AG04449 (cell line): ENCODE measurements at regions of chr22 and their contacts with region 1.

Region 1: GRCh38 chr22:41596776-41597634 is 7.4 kb upstream of the PMM1 start:
- DNase-seq: no peak
- H3K4me3 ChIP-seq: no peak overlapping the region
- CTCF ChIP-seq: peak; percentile 94

Region 2: DNA sequence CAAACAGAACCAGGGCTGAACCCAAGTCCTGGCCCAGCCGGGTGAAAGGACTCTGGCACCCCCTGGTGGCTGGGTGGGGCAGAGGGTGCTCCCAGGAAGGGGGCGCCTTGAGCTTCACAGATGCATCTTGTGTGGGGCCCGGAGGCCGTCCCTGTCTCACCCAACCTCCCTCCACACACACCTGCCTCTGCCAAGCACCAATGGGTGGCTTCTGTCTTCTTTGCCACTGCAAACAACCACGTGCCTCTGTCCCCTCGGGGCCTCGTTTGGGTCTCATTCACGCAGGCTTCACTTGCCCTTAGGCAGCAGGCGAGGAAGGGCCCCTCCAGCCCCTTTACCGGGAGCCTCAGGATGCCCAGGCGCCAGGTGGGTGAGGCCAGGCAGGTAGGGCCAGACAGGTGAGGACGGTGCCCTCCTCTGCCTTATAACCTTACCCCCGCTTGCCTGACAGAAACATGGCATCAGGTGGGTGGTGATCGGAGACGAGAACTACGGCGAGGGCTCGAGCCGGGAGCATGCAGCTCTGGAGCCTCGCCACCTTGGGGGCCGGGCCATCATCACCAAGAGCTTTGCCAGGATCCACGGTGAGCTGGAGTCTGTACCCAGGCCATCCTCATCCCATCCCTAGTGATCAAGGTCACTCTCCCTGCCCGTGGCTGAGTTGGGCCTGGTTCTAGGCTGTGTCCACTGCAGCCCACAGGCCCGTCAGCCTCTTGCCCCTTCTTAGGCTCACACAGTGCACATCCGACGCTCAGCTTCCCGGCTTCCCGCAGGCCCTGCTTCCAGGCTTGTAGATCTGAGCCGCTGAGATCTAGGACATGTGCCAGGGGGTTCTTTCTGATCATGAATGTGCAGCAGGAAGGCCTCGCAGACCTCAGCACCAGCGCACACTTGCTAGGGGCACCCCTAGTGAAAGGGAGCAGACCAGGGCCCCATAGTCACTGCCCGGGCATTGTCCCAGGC is 69.9 kb before region 1 on chr22:
- CTCF ChIA-PET with region 1: interaction called, 27 read pairs
- POLR2A ChIA-PET with region 1: no interaction called
- DNase-seq: no peak
- H3K4me3 ChIP-seq: no peak overlapping the region
- CTCF ChIP-seq: peak; percentile 88

Region 3: DNA sequence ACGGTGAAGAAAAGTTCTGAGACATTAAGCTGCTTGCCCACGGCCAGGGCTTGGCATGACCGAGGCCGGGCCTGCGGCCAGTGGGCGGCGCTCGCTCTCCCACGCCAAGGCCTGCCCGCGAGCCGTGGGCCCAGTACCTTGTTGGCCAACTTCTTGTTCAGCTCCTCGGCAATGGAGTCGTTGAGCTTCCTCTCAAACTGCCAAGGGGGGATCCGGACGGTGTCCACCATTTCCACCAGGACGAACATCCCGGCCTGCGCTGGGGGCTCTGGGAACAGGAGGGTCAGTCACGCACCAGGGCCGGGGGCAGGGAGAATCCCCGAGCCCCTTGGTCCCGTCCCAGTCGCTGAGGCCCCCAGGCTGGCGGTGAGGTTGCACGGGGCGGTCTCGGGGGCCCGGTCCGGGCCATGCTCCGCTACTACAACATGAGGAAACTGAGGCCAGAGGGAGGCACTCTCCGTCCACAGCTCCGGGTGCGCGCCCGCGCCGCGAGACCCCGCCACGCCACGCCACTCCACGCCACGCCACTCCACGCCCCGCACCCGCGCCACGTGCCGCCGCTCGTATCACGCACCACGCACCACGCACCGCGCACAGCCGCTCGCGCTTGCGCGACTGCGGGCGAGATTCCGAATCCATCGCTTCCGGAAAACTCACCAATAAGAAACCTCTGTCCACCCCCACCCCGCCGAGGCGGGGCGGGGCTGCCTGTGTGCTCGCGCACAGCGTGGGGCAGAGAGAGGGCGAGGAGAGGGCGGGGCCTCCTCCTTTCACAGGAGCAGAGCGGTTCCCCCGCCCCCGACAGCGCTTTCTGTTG is 52.9 kb before region 1 on chr22 and contains the start of gene POLR3H:
- CTCF ChIA-PET with region 1: interaction called, 49 read pairs
- POLR2A ChIA-PET with region 1: no interaction called
- DNase-seq: peak; percentile 72
- H3K4me3 ChIP-seq: peak within 1 kb of the TSS; percentile 91
- CTCF ChIP-seq: peak; percentile 78

Region 4: DNA sequence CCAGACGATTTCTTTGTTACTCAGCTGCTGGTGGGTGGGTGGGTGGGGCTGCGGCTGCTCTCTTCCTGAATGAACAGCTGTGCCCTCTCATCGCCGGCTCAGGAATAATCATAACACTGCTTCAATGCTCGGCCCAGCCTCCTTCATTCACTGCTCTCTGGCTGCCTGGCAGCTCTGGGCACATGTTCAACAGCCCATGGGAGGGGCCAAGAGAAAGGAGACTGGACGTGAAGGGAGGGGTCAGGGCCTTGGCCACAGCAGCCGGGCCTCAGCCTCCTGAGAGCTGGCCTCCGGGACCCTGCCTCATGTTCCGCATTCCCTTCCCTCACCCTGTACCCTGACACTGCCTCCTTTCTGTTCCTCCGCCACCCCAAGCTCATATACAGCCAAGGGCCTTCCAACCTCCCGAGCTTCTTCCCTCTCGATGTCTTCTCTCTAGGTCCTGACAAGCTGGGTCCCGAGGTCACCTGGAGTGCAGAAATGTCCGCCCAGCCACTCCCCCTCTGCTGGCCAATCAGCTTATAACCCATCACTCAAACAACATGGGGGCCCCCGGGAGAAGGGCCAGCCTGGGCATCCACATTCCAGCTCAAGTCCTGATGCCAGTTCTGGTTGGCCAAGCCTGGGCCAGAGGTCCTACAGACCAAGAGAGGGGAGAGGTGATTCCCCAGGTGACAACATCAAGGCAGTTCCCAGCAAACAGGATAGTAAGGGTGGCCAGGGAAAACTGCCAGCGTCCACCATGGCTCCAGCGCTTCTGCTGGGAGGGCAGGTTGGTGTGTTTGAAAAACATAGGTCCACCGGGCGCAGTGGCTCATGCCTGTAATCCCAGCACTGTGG is 39.4 kb before region 1 on chr22:
- CTCF ChIA-PET with region 1: interaction called, 34 read pairs
- POLR2A ChIA-PET with region 1: interaction called, 3 read pairs
- DNase-seq: no peak
- H3K4me3 ChIP-seq: no peak overlapping the region
- CTCF ChIP-seq: no peak

Region 5: DNA sequence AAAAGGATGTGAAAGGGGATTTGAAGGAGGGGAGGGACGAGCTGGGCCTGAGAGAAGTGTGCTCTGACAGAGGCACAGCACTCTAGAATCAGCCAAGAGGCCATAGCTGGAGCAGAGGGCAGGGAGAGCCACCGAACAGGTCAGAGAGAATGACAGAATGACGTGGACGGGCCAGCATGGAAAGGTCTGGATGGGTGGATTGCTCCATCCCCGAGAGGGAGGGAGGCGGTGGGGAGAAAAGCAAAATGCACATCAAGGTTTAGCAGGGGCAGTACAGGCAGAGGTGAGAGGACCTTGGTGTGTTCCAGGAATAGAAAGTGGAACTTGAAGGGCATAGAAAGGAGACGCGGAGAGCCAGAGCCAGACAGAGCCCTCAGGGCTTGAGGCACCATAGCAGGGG is 14.3 kb before region 1 on chr22:
- CTCF ChIA-PET with region 1: interaction called, 12 read pairs
- POLR2A ChIA-PET with region 1: no interaction called
- DNase-seq: no peak
- H3K4me3 ChIP-seq: no peak overlapping the region
- CTCF ChIP-seq: no peak

Region 6: GRCh38 chr22:41613456-41613855 is 16.5 kb after region 1 on chr22:
- CTCF ChIA-PET with region 1: interaction called, 38 read pairs
- POLR2A ChIA-PET with region 1: no interaction called
- DNase-seq: no peak
- H3K4me3 ChIP-seq: no peak overlapping the region
- CTCF ChIP-seq: no peak

Region 7: GRCh38 chr22:41697126-41697775 is 100.2 kb after region 1 on chr22:
- CTCF ChIA-PET with region 1: no interaction called
- POLR2A ChIA-PET with region 1: no interaction called
- DNase-seq: peak; percentile 31
- H3K4me3 ChIP-seq: peak overlapping the region; percentile 9; the same call in 1 of the 2 replicates
- CTCF ChIP-seq: peak; percentile 93